CD4-positive, alpha-beta T cell (primary cell): ENCODE measurements at regions of chr19 and their contacts with region 1.

Region 1: GRCh38 chr19:3116255-3116602 is 19.6 kb upstream of the GNA15 start:
- DNase-seq: no peak
- ATAC-seq: no peak
- H3K4me3 ChIP-seq: no peak overlapping the region
- H3K4me3 Mint-ChIP-seq: no peak overlapping the region
- H3K27ac ChIP-seq: no peak overlapping the region
- H3K27ac Mint-ChIP-seq: no peak overlapping the region
- H3K4me1 ChIP-seq: no peaks in the 10 kb centered on the region
- H3K4me1 Mint-ChIP-seq: no peaks in the 10 kb centered on the region
- H3K27me3 ChIP-seq: no peaks in the 10 kb centered on the region
- H3K27me3 Mint-ChIP-seq: no peaks in the 10 kb centered on the region
- CTCF ChIP-seq: no peak

Region 2: DNA sequence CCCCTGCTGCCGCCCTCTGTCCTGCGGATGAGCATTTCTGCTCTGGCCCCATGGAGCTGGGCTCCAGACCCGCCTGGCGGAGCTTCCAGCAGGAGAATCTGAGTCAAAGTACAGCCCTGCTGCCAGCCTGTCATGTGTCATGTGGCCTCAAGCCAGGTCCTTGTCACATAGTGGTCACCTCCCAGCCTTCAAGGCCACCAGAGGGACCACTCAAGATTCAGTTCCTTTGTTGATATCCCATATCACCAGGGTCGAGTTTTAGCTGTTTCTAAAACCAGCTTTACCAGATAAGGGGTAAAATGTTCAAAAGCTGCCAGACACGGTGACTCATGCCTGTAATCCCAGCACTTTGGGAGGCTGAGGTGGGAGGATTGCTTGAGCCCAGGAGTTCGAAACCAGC is 317.5 kb before region 1 on chr19:
- CTCF ChIA-PET with region 1: no interaction called
- POLR2A ChIA-PET with region 1: no interaction called
- intact Hi-C with region 1: loop called in 1 of 2 experiments (anchors 10 kb)
- DNase-seq: no peak
- ATAC-seq: no peak
- H3K4me3 ChIP-seq: no peak overlapping the region
- H3K4me3 Mint-ChIP-seq: no peak overlapping the region
- H3K27ac ChIP-seq: no peak overlapping the region
- H3K27ac Mint-ChIP-seq: no peak overlapping the region
- H3K4me1 ChIP-seq: no peaks in the 10 kb centered on the region
- H3K4me1 Mint-ChIP-seq: no peaks in the 10 kb centered on the region
- H3K27me3 ChIP-seq: no peaks in the 10 kb centered on the region
- H3K27me3 Mint-ChIP-seq: no peaks in the 10 kb centered on the region
- CTCF ChIP-seq: no peak

Region 3: GRCh38 chr19:3163230-3163886 is 47.1 kb after region 1 on chr19:
- CTCF ChIA-PET with region 1: no interaction called
- POLR2A ChIA-PET with region 1: no interaction called
- intact Hi-C with region 1: no loop called
- DNase-seq: peak; percentile 60 to 87 (median 68)
- ATAC-seq: peak; percentile 94
- H3K4me3 ChIP-seq: no peak overlapping the region
- H3K4me3 Mint-ChIP-seq: no peak overlapping the region
- H3K27ac ChIP-seq: no peak overlapping the region
- H3K27ac Mint-ChIP-seq: peak overlapping the region; percentile 29
- H3K4me1 ChIP-seq: peaks cover 19% of the 10 kb centered on the region
- H3K4me1 Mint-ChIP-seq: peaks cover 13% of the 10 kb centered on the region
- H3K27me3 ChIP-seq: no peaks in the 10 kb centered on the region
- H3K27me3 Mint-ChIP-seq: no peaks in the 10 kb centered on the region
- CTCF ChIP-seq: peak; percentile 89